ENCODE measurements at regions of chr14 and their contacts with region 1.

Region 1: DNA sequence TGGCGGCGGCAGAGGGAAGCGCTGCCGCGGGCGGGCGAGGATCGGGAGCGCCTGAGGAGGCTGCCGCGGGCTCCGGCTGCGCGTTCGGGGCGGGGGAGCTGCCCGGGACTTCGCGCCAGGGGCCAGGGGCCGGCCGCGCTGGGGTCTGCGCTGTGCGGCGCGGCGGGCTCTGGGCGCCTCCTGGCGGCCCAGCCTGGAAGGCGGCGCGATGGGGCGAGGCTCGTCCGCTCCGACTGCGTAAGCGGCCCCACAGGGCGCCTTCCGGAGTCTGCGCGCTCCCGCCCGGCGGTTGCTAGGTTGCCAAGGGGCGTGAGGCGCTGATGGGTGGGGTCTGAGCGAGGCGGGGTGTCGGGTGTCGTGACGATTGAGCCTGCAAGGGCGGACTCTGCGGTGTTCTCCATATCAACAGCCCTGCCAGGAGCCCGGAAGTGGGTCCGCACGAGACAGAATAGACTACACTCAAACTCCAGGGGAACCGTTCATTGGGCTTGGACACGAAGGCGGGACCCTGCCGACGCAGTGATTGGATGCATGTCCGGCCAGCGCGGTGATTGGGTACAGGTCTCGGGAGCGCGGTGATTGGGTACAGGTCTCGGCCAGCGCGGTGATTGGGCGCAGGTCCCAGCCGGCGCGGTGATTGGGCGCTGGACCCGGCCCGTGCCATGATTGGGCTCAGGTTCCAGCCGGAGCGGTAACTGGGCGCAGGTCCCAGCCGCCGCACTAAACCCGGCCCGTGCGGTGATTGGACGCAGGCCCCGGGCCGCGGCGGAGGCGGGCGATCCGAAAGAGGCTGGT is at the start of gene TEDC1:
- DNase-seq: peak; percentile 98 to 100 (median 99)
- ATAC-seq: peak; percentile 67
- H3K4me3 ChIP-seq: peak within 1 kb of the TSS; percentile 59 to 84
- H3K4me3 Mint-ChIP-seq: peak within 1 kb of the TSS; percentile 84
- H3K27ac ChIP-seq: peak within 1 kb of the TSS; percentile 95 to 96
- H3K27ac Mint-ChIP-seq: peak within 1 kb of the TSS; percentile 96
- H3K4me1 ChIP-seq: peaks cover 39% of the 10 kb centered on the region
- H3K4me1 Mint-ChIP-seq: peaks cover 27% of the 10 kb centered on the region
- H3K27me3 ChIP-seq: no peaks in the 10 kb centered on the region
- H3K27me3 Mint-ChIP-seq: no peaks in the 10 kb centered on the region
- CTCF ChIP-seq: peak; percentile 84
- total RNA-seq, gene TEDC1: 55.3 to 58.5 TPM

Region 2: GRCh38 chr14:104499784-104500760 is 990.7 kb before region 1 on chr14:
- CTCF ChIA-PET with region 1: no interaction called
- POLR2A ChIA-PET with region 1: no interaction called
- intact Hi-C with region 1: no loop called
- DNase-seq: peak in 2 of 9 experiments; percentile 5 to 39
- ATAC-seq: no peak
- H3K4me3 ChIP-seq: no peak overlapping the region
- H3K4me3 Mint-ChIP-seq: no peak overlapping the region
- H3K27ac ChIP-seq: no peak overlapping the region
- H3K27ac Mint-ChIP-seq: no peak overlapping the region
- H3K4me1 ChIP-seq: no peaks in the 10 kb centered on the region
- H3K4me1 Mint-ChIP-seq: no peaks in the 10 kb centered on the region
- H3K27me3 ChIP-seq: no peaks in the 10 kb centered on the region
- H3K27me3 Mint-ChIP-seq: peaks cover 4% of the 10 kb centered on the region
- CTCF ChIP-seq: no peak

Region 3: DNA sequence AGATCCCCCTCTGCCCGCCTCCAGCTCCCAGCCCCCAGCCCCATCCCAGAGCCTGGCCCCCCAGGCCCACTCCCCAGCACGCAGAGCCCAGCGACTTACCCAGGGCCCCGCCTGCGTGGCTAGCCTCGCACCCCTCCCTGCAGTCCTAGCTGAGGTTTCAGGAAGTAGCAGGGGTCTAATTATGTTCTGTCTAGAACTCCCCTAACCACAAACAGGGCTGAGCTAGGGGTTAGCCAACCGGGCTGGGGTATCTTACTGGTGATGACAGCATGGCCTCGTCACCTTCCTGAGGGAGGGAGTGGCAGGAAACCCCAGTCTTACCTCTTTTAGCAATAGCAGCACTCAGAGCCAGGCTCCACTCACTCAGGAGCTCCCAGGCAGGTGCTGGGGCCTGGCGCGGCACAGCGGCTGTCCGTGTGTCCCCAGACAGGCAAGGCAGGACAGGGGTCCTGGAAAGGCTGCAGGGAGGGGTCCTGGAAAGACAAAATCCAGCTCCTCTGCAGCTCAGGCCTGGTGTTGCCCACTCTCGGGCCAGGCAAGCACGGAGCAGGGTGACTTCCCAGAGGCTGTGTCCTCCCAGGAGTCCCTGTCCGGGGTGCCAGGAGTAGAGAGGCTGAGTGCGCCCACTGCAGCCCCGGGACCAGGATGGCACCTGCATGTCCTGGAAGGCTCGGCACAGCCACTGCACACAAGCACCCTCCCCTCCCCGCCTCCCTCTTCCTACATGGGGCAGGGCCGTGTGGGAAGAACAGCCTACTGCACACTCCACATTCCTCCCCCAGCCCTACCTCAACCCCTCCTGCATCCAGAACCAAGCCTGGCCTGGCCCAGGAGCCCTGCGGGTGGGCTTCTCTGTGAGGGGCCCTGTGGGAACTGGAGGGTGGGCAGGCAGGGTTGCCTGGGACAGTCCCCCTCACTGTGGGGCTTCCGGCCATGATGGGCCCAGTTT is 425.2 kb before region 1 on chr14 and contains the start of gene GPR132:
- CTCF ChIA-PET with region 1: interaction called, 3 read pairs
- POLR2A ChIA-PET with region 1: interaction called, 5 read pairs
- intact Hi-C with region 1: loop called (anchors 5 to 10 kb)
- DNase-seq: peak; percentile 79 to 99 (median 89)
- ATAC-seq: peak; percentile 87
- H3K4me3 ChIP-seq: peak within 1 kb of the TSS; percentile 90 to 92
- H3K4me3 Mint-ChIP-seq: peak within 1 kb of the TSS; percentile 94
- H3K27ac ChIP-seq: peak within 1 kb of the TSS; percentile 97 to 98
- H3K27ac Mint-ChIP-seq: peak within 1 kb of the TSS; percentile 98
- H3K4me1 ChIP-seq: peaks cover 88% of the 10 kb centered on the region
- H3K4me1 Mint-ChIP-seq: peaks cover 75% of the 10 kb centered on the region
- H3K27me3 ChIP-seq: no peaks in the 10 kb centered on the region
- H3K27me3 Mint-ChIP-seq: no peaks in the 10 kb centered on the region
- CTCF ChIP-seq: no peak
- total RNA-seq, gene GPR132: 91.8 to 101 TPM

Region 4: GRCh38 chr14:105300792-105301533 is 189.8 kb before region 1 on chr14 and contains the start of gene BRF1:
- CTCF ChIA-PET with region 1: interaction called, 5 read pairs
- POLR2A ChIA-PET with region 1: interaction called, 6 read pairs
- intact Hi-C with region 1: loop called (anchors 1 kb)
- DNase-seq: peak; percentile 95 to 100 (median 99)
- ATAC-seq: peak; percentile 90
- H3K4me3 ChIP-seq: peak within 1 kb of the TSS; percentile 71 to 97
- H3K4me3 Mint-ChIP-seq: peak within 1 kb of the TSS; percentile 88
- H3K27ac ChIP-seq: peak within 1 kb of the TSS; percentile 86 to 91
- H3K27ac Mint-ChIP-seq: peak within 1 kb of the TSS; percentile 89
- H3K4me1 ChIP-seq: peaks cover 28% of the 10 kb centered on the region
- H3K4me1 Mint-ChIP-seq: peaks cover 37% of the 10 kb centered on the region
- H3K27me3 ChIP-seq: no peaks in the 10 kb centered on the region
- H3K27me3 Mint-ChIP-seq: no peaks in the 10 kb centered on the region
- CTCF ChIP-seq: no peak
- total RNA-seq, gene BRF1: 60.0 to 61.2 TPM

Region 5: GRCh38 chr14:105375635-105376057 is 115.1 kb before region 1 on chr14:
- CTCF ChIA-PET with region 1: interaction called, 105 read pairs
- POLR2A ChIA-PET with region 1: interaction called, 28 read pairs
- intact Hi-C with region 1: loop called (anchors 1 kb)
- DNase-seq: peak in 3 of 9 experiments; percentile 24 to 50 (median 35)
- ATAC-seq: peak; percentile 43
- H3K4me3 ChIP-seq: no peak overlapping the region
- H3K4me3 Mint-ChIP-seq: no peak overlapping the region
- H3K27ac ChIP-seq: no peak overlapping the region
- H3K27ac Mint-ChIP-seq: no peak overlapping the region
- H3K4me1 ChIP-seq: peaks cover 13% of the 10 kb centered on the region
- H3K4me1 Mint-ChIP-seq: peaks cover 12% of the 10 kb centered on the region
- H3K27me3 ChIP-seq: peaks cover 0 to 2% of the 10 kb centered on the region in 2 experiments
- H3K27me3 Mint-ChIP-seq: no peaks in the 10 kb centered on the region
- CTCF ChIP-seq: no peak

Region 6: DNA sequence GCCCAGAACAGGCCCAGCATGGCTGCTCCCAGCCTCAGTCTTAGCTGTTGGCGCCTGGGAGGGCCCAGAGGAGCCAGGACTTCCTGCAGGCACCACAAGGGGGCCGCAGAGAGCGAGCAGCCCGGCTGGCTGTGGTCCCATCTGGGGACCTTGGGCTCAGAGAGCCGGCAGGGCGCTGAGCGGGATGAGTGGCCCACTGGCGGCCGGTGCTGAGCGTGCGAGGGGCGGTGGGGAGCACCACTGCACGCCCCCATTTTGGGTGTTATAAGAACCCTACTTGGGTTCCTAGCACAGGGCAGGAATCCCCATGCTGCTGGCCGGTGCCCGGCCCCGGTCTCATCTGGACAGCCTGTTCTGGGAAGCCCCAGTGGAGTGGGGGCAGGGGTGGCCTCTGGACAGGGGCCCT is 42.1 kb before region 1 on chr14:
- CTCF ChIA-PET with region 1: interaction called, 12 read pairs
- POLR2A ChIA-PET with region 1: interaction called, 5 read pairs
- intact Hi-C with region 1: loop called (anchors 1 kb)
- DNase-seq: peak; percentile 49 to 77 (median 72)
- ATAC-seq: peak; percentile 99
- H3K4me3 ChIP-seq: no peak overlapping the region
- H3K4me3 Mint-ChIP-seq: no peak overlapping the region
- H3K27ac ChIP-seq: no peak overlapping the region
- H3K27ac Mint-ChIP-seq: no peak overlapping the region
- H3K4me1 ChIP-seq: no peaks in the 10 kb centered on the region
- H3K4me1 Mint-ChIP-seq: no peaks in the 10 kb centered on the region
- H3K27me3 ChIP-seq: no peaks in the 10 kb centered on the region
- H3K27me3 Mint-ChIP-seq: no peaks in the 10 kb centered on the region
- CTCF ChIP-seq: peak; percentile 76

Region 7: GRCh38 chr14:105527661-105528581 is 37.2 kb after region 1 on chr14:
- CTCF ChIA-PET with region 1: interaction called, 11 read pairs
- POLR2A ChIA-PET with region 1: interaction called, 3 read pairs
- intact Hi-C with region 1: loop called (anchors 1 kb)
- DNase-seq: peak; percentile 66 to 89 (median 79)
- ATAC-seq: peak; percentile 69
- H3K4me3 ChIP-seq: peak overlapping the region; percentile 38 to 66
- H3K4me3 Mint-ChIP-seq: peak overlapping the region; percentile 75
- H3K27ac ChIP-seq: no peak overlapping the region
- H3K27ac Mint-ChIP-seq: no peak overlapping the region
- H3K4me1 ChIP-seq: peaks cover 32% of the 10 kb centered on the region
- H3K4me1 Mint-ChIP-seq: peaks cover 18% of the 10 kb centered on the region
- H3K27me3 ChIP-seq: peaks cover 4 to 24% of the 10 kb centered on the region in 2 experiments
- H3K27me3 Mint-ChIP-seq: peaks cover 7% of the 10 kb centered on the region
- CTCF ChIP-seq: peak; percentile 73

Region 8: GRCh38 chr14:105760691-105761346 is 270.1 kb after region 1 on chr14:
- CTCF ChIA-PET with region 1: no interaction called
- POLR2A ChIA-PET with region 1: no interaction called
- intact Hi-C with region 1: no loop called
- DNase-seq: peak in 1 of 9 experiments; percentile 40
- ATAC-seq: no peak
- H3K4me3 ChIP-seq: no peak overlapping the region
- H3K4me3 Mint-ChIP-seq: no peak overlapping the region
- H3K27ac ChIP-seq: no peak overlapping the region
- H3K27ac Mint-ChIP-seq: no peak overlapping the region
- H3K4me1 ChIP-seq: no peaks in the 10 kb centered on the region
- H3K4me1 Mint-ChIP-seq: no peaks in the 10 kb centered on the region
- H3K27me3 ChIP-seq: no peaks in the 10 kb centered on the region
- H3K27me3 Mint-ChIP-seq: peaks cover 5% of the 10 kb centered on the region
- CTCF ChIP-seq: no peak

Region 9: GRCh38 chr14:106235356-106236159 is 744.8 kb after region 1 on chr14:
- CTCF ChIA-PET with region 1: no interaction called
- POLR2A ChIA-PET with region 1: no interaction called
- intact Hi-C with region 1: no loop called
- DNase-seq: no peak
- ATAC-seq: no peak
- H3K4me3 ChIP-seq: no peak overlapping the region
- H3K4me3 Mint-ChIP-seq: no peak overlapping the region
- H3K27ac ChIP-seq: no peak overlapping the region
- H3K27ac Mint-ChIP-seq: no peak overlapping the region
- H3K4me1 ChIP-seq: peaks cover 19% of the 10 kb centered on the region
- H3K4me1 Mint-ChIP-seq: peaks cover 24% of the 10 kb centered on the region
- H3K27me3 ChIP-seq: no peaks in the 10 kb centered on the region
- H3K27me3 Mint-ChIP-seq: no peaks in the 10 kb centered on the region
- CTCF ChIP-seq: no peak